RWPE1 (cell line): ENCODE measurements at regions of chr14 and their contacts with region 1.

Region 1: DNA sequence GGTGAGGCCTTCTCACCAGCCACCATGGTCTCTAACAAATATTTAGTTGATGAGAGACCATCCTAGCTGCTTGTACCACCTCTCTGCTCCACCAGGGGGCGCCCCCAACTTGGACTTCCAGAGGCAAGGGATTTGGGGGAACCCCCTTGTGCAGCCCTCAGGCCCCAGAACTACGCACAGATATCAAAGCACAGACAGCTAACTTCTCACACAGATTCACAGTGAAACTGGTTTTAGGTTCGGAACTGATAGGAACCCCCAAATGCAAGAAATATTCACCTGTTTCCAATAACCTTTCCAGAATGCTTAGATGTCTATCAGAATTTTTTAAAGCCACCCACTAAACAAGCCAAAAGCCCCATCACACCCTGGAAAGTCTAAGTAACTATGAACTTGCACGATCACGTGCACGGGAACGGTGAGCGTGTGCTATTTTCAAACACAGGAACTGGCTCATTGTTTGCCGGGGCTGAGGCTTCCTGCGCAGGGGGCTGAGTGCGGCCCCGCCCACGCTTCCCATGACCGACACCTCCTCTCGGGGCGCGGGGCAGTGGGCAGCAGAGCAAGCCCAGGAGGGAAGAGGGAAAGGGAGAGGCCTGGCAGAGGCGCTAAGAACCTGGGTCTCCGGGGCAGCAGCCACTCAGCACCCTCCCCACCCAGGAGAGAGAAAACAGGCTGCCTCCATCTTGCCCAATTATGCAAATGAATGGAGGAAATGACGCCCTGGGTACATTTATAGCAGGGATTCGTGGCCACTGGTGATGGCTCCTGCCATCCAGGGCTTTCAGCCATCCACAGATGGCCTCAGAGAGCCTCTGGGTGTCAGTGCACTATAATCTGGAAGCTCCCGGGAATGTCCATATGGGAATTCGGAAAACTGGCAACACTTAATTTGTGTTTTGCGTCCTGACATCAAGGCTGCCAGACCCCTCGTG is 79.4 kb upstream of the GPR68 start:
- DNase-seq: peak; percentile 71
- H3K27ac ChIP-seq: peak overlapping the region; percentile 48
- CTCF ChIP-seq: peak; percentile 90

Region 2: GRCh38 chr14:90903101-90903500 is 420.8 kb before region 1 on chr14:
- CTCF ChIA-PET with region 1: interaction called, 10 read pairs
- POLR2A ChIA-PET with region 1: no interaction called
- DNase-seq: peak; percentile 74
- H3K27ac ChIP-seq: no peak overlapping the region
- CTCF ChIP-seq: peak; percentile 80

Region 3: DNA sequence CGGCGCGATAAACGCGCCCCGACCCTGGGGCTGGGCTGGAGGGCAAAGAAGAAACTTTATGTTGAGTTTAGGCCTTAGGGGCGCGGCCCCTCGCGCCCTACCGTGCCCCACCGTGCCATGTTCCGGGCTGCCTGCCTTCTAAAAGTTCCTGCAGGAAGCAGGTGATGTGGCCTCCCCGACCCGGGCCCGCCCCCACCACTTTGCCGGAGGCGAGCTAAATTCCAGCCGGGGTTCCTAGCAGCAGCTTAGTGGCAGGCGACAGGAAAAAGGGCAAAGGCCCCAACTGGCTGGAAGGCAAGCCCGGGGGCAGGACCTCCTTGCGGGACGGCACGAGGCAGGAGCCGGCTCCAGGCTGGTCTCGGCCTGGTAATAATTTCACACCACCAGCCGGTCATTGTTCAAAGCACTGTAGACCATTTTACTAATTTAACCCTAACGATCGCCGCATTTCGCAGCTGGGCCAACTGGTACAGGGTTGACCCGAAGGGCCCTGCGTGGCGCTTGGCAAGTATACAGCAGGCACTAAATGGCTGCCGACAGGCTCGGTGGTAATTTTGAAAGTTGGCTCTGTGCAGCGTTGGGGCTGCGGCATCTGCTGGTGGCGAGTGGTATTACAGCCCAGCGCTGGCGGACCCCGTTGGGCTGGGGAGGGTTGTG is 94.6 kb after region 1 on chr14:
- CTCF ChIA-PET with region 1: interaction called, 27 read pairs
- POLR2A ChIA-PET with region 1: interaction called, 3 read pairs
- DNase-seq: peak; percentile 48
- H3K27ac ChIP-seq: peak overlapping the region; percentile 91
- CTCF ChIP-seq: peak; percentile 98